Right ventricle myocardium superior (tissue), 1 donor: ENCODE measurements at regions of chr4 and their contacts with region 1.

Region 1: GRCh38 chr4:121370729-121371325 is 10.0 kb downstream of the QRFPR start:
- DNase-seq: no peak
- ATAC-seq: peak; percentile 85

Region 2: DNA sequence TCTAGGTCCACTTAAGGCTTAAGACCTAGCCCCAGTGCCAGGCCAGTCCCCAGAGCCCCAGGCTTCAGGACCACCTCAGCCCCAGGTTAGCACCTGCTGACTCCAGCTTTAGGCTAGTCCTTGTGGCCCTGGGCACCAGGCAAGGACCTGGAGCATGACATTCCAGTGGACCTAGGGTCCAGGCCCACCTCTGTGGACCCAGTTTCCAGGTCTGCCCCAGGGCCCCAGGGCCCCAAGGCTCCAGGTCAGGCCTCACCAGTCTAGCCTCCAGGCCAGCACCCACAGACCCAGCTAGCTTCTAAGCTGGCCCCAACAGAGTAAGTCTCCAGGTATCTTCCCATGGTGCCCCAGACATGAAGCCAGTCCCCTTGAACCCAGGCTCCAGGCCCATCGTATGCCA is 87.5 kb before region 1 on chr4:
- intact Hi-C with region 1: no loop called
- DNase-seq: no peak
- ATAC-seq: no peak

Region 3: GRCh38 chr4:121421594-121421993 is 50.8 kb after region 1 on chr4:
- intact Hi-C with region 1: loop called (anchors 2 kb)
- DNase-seq: no peak
- ATAC-seq: peak; percentile 75

Region 4: DNA sequence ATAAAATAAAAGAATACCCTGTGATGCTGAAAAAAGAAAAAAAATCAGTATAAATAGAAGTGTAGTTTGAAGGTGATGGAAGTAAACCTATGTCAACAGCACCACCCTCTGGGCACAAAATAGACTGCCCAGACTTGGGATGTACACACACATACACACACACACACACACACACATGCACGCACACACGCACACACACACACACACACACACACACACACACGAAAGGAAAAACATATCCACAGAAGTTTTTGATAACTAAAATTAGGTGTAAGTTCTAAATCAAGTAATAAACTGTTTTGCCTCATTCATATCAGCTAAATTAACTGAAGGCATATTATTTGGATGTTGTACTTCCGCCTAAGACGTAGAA is 285.4 kb after region 1 on chr4:
- intact Hi-C with region 1: loop called (anchors 5 kb)
- DNase-seq: peak; percentile 47
- ATAC-seq: peak; percentile 82

Region 5: DNA sequence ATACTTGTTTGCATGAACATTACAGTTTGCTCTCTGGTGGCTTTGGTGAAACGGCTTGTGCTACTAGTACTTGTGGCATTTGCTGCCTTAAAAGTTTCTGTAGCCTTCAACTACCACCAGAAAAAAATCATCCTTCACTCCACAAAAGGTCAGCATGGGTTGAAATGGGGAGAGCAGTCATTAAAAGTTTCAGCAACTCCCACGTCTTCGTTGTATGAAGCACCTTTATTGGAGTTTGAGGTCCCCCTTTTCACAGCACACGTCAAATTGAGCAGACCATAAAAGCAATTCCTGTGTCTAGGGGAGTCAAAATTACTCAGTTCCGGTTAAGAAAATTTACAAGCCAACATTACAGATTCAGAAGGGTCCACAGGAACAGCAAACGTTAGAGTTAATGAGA is 475.8 kb after region 1 on chr4:
- intact Hi-C with region 1: no loop called
- DNase-seq: no peak
- ATAC-seq: no peak